Spleen (tissue), 13 donors: ENCODE measurements at regions of chr1 and their contacts with region 1.

Region 1: DNA sequence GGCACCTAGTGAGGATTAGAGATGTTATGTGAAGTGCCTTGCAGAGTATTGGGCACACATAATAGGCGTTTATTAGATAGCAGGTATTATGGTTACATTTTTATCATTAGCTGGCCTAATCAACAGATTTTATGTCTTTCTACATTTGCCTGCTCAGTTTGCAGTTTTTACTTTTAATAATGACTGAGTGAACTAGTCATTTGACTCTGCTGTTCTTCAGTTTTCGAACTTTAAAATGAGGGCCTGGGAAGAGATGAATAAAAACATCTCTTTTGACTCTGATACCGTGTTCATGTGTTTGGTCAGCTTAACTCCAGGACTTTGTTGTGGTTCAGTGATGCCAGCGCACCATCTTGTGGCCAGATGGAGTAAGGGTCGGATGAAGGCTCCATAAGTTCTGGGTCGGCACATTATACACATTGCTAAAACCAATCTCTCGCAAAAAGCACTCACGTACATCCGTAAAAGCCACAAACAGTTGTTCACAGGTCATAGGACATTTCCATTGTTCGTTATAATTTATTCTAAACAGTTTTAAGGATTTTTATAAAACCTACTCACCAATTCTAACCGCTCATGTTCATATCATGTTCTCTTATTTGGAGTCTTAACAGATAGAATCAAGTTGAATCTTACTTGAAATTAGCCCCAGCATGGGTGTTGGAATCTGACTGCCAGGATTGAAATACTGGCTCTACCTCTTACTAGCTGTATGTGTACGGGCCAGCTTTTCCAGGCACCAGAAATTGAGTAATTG is 78.4 kb upstream of the GPR88 start:
- DNase-seq: peak; percentile 86
- H3K4me3 ChIP-seq: no peak overlapping the region
- H3K27ac ChIP-seq: peak overlapping the region in 3 of 8 donors; percentile 3 to 14 (median 9)
- H3K4me1 ChIP-seq: peaks cover 10 to 43% (median 24%) of the 10 kb centered on the region in 6 donors
- H3K27me3 ChIP-seq: no peaks in the 10 kb centered on the region
- CTCF ChIP-seq: peak; percentile 69 to 89 (median 85)
- POLR2A ChIP-seq: no peak

Region 2: DNA sequence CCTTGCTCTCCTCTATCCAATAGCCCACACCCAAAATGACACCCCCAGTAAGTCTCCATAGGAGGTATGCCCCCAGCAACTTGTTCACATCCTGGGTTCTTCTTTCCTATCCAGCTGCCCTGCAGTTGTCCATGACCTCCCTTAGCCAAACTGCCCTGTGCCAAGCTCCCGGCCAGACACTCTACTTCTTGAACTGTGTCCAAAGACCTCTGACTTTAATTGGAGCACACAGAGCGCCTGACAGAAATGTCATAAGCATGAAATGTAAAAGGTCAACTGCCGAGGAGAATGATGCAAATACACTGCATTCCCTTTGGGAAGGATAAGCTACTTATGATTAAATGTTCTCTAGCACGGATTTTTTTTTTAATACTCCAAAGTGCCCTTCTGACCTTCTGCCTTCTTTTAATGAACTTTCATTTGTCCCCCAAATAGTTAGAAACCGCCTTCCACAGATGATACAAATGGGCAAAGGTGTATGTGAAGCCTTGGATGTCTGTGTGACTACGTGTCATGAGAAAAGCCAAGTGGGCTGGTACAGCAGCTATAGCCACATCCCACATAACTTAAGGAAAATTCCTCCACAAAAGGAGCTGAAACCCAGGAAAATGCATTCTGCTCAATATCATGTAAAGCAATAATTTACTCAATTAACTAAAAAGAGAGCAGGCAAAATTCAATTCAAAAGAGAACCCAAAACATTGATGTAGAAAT is 786.9 kb before region 1 on chr1:
- intact Hi-C with region 1: no loop called
- DNase-seq: no peak
- H3K4me3 ChIP-seq: no peak overlapping the region
- H3K27ac ChIP-seq: no peak overlapping the region
- H3K4me1 ChIP-seq: peaks cover 0 to 10% (median 0%) of the 10 kb centered on the region in 6 donors
- H3K27me3 ChIP-seq: no peaks in the 10 kb centered on the region
- CTCF ChIP-seq: no peak
- POLR2A ChIP-seq: no peak

Region 3: GRCh38 chr1:99814373-99814900 is 645.1 kb before region 1 on chr1:
- intact Hi-C with region 1: loop called (anchors 5 kb)
- DNase-seq: no peak
- H3K4me3 ChIP-seq: no peak overlapping the region
- H3K27ac ChIP-seq: no peak overlapping the region
- H3K4me1 ChIP-seq: peaks cover 0 to 4% (median 0%) of the 10 kb centered on the region in 6 donors
- H3K27me3 ChIP-seq: no peaks in the 10 kb centered on the region
- CTCF ChIP-seq: no peak
- POLR2A ChIP-seq: no peak